Adrenal gland (tissue), 19 donors: ENCODE measurements at regions of chr3 and their contacts with region 1.

Region 1: DNA sequence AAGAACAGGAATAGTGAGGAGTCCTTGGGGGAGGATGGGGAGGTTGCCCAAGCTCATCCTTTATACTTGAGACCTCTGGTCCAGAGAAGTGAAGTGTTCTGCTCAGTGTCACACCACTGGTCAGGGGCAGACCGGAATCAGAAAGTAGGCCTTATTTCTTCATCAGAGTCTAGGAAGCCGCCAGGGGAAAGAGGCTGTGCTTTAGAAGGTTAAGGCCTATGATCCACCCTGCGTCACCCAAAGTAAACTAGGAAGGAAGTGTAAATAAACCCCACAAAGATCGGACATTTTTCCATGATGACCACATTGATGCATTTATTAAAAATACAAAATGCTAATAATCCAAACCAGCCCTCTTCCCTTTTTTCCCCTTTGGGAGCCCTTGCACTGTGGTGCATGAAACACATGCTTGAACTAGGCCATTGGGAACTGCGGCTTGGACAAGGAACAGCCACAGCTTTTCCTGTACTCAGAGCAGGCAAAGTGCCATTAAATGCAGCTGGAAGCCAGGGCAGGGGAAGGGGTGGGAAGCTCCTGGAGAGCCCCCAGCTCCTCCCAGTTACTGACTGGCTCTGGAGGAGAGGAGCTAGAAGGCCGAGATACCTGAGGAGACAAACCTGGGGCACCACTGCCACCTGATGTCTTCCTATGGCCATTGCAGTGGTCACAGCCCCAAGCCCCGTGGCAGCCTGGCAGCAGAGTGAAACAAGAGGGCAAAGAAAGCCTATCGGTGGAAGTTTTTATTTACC is 37.0 kb downstream of the CDC25A start:
- DNase-seq: peak; percentile 70 to 92 (median 86)
- H3K4me3 ChIP-seq: no peak overlapping the region
- H3K27ac ChIP-seq: peak overlapping the region in 2 of 5 donors; percentile 54 to 65
- H3K4me1 ChIP-seq: peaks cover 0 to 8% of the 10 kb centered on the region in 2 donors
- H3K27me3 ChIP-seq: no peaks in the 10 kb centered on the region
- CTCF ChIP-seq: peak; percentile 62 to 91 (median 84)
- POLR2A ChIP-seq: no peak

Region 2: GRCh38 chr3:47836986-47837385 is 314.2 kb before region 1 on chr3:
- intact Hi-C with region 1: loop called in 1 of 2 experiments (anchors 5 kb)
- DNase-seq: no peak
- H3K4me3 ChIP-seq: no peak overlapping the region
- H3K27ac ChIP-seq: no peak overlapping the region
- H3K4me1 ChIP-seq: no peaks in the 10 kb centered on the region
- H3K27me3 ChIP-seq: no peaks in the 10 kb centered on the region
- CTCF ChIP-seq: no peak
- POLR2A ChIP-seq: no peak

Region 3: DNA sequence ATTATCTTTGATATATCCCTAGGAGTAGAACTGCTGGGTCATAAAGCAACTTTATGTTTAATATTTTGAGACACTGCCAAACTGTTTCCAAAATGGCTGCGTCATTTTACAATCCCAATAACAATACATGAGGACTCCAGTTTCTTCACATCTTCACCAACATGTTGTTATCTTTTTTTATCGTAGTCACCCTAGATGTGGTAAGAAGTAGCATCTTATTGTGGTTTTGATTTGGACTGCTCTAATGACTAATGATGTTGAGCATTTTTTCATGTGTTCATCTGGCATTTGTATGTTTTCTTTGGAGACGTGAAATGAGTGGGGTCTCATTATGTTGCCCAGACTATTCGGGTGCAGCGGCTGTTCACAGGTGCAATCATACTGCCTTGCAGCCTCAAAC is 218.8 kb before region 1 on chr3:
- intact Hi-C with region 1: no loop called
- DNase-seq: no peak
- H3K4me3 ChIP-seq: no peak overlapping the region
- H3K27ac ChIP-seq: no peak overlapping the region
- H3K4me1 ChIP-seq: no peaks in the 10 kb centered on the region
- H3K27me3 ChIP-seq: no peaks in the 10 kb centered on the region
- CTCF ChIP-seq: no peak
- POLR2A ChIP-seq: no peak

Region 4: GRCh38 chr3:48112813-48113212 is 38.4 kb before region 1 on chr3:
- intact Hi-C with region 1: no loop called
- DNase-seq: no peak
- H3K4me3 ChIP-seq: no peak overlapping the region
- H3K27ac ChIP-seq: no peak overlapping the region
- H3K4me1 ChIP-seq: no peaks in the 10 kb centered on the region
- H3K27me3 ChIP-seq: no peaks in the 10 kb centered on the region
- CTCF ChIP-seq: no peak
- POLR2A ChIP-seq: no peak

Region 5: DNA sequence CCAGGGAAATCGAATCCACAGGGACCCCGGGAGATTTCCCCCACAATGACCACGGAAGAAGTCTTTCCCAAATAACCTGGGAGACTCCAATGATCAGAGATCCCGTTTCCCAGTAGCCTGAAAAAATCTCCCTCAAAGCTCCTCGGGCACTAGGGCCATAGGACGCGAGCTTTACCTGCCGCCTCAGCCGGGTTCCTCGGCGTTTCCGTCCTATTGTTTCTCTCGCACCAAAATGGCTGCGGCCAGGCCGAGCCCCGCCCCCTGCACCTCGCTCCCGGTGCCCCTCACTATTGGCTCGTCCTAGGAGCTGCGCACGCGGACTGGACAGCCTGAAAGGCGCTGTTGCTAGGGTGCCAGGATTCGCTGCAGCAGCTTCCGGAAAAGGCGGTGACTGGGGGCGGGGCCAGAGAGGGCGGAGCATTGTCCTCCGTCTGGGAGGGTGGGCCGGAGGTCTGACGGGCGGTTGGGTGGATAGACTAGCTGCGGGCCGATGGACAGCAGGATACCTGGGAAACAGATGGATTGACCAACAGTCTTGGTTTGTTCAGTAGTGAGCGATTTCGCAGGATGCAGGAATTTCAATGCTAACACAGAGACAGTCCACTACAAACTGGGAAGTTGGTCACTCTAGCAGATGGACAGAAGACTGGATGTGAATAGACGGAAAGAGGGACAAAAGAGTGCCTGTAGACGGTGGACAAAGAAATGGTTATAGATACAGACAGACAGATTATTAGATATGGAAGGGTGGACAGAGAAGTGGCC is 565.9 kb after region 1 on chr3 and contains the start of gene IP6K2:
- intact Hi-C with region 1: no loop called
- DNase-seq: peak; percentile 98 to 99 (median 99)
- H3K4me3 ChIP-seq: peak within 1 kb of the TSS; percentile 50 to 74 (median 69)
- H3K27ac ChIP-seq: peak within 1 kb of the TSS; percentile 62 to 91 (median 81)
- H3K4me1 ChIP-seq: peaks cover 13 to 39% of the 10 kb centered on the region in 2 donors
- H3K27me3 ChIP-seq: no peaks in the 10 kb centered on the region
- CTCF ChIP-seq: no peak
- POLR2A ChIP-seq: peak; percentile 33 to 89
- total RNA-seq, gene IP6K2: 44.9 to 130 (median 103) TPM